ENCODE measurements at regions of chrX and their contacts with region 1.

Region 1: GRCh38 chrX:71181910-71182799 is 37.5 kb downstream of the NLGN3 start:
- DNase-seq: peak; percentile 95
- H3K4me3 ChIP-seq: peak overlapping the region in 2 of 3 experiments; percentile 33 to 55
- H3K27ac ChIP-seq: peak overlapping the region; percentile 63
- H3K4me1 ChIP-seq: peaks cover 7% of the 10 kb centered on the region
- H3K27me3 ChIP-seq: no peaks in the 10 kb centered on the region
- CTCF ChIP-seq: no peak
- POLR2A ChIP-seq: peak; percentile 68

Region 2: DNA sequence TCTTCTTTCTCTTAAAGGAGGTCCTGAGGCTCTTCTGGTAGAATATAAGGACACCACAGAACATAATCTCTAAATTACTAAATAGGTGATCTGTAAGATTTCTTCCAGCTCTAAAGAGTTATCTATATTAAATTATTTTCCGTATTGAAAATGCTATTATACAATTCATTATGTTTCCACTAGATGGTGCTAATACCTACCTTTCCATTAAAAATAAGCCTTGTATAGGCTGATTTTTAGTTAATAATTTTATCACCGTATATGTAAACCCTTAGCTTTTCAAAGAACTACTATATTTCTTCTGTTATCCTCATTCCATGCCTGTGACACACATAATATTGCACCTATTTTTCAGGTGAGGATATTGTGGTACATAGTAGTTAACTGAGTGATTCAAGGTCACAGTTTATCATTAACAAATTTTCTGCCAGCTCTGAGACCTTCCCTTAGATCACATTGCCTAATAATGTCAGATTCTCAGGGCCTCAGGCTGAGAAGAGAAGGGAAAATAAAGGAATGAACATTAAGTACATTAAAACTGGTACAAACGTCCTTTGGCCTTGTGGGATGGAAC is 412.4 kb before region 1 on chrX:
- CTCF ChIA-PET with region 1: interaction called, 7 read pairs
- POLR2A ChIA-PET with region 1: no interaction called
- dilution Hi-C with region 1: no loop called
- intact Hi-C with region 1: loop called (anchors 1 kb)
- DNase-seq: peak; percentile 3
- H3K4me3 ChIP-seq: no peak overlapping the region
- H3K27ac ChIP-seq: no peak overlapping the region
- H3K4me1 ChIP-seq: no peaks in the 10 kb centered on the region
- H3K27me3 ChIP-seq: no peaks in the 10 kb centered on the region
- CTCF ChIP-seq: no peak
- POLR2A ChIP-seq: no peak

Region 3: GRCh38 chrX:70998411-70999027 is 183.6 kb before region 1 on chrX:
- CTCF ChIA-PET with region 1: interaction called, 3 read pairs
- POLR2A ChIA-PET with region 1: no interaction called
- dilution Hi-C with region 1: no loop called
- intact Hi-C with region 1: loop called (anchors 1 kb)
- DNase-seq: peak; percentile 9
- H3K4me3 ChIP-seq: no peak overlapping the region
- H3K27ac ChIP-seq: no peak overlapping the region
- H3K4me1 ChIP-seq: no peaks in the 10 kb centered on the region
- H3K27me3 ChIP-seq: peaks cover 0 to 2% of the 10 kb centered on the region in 2 experiments
- CTCF ChIP-seq: peak in 1 of 2 donors; percentile 8
- POLR2A ChIP-seq: no peak

Region 4: DNA sequence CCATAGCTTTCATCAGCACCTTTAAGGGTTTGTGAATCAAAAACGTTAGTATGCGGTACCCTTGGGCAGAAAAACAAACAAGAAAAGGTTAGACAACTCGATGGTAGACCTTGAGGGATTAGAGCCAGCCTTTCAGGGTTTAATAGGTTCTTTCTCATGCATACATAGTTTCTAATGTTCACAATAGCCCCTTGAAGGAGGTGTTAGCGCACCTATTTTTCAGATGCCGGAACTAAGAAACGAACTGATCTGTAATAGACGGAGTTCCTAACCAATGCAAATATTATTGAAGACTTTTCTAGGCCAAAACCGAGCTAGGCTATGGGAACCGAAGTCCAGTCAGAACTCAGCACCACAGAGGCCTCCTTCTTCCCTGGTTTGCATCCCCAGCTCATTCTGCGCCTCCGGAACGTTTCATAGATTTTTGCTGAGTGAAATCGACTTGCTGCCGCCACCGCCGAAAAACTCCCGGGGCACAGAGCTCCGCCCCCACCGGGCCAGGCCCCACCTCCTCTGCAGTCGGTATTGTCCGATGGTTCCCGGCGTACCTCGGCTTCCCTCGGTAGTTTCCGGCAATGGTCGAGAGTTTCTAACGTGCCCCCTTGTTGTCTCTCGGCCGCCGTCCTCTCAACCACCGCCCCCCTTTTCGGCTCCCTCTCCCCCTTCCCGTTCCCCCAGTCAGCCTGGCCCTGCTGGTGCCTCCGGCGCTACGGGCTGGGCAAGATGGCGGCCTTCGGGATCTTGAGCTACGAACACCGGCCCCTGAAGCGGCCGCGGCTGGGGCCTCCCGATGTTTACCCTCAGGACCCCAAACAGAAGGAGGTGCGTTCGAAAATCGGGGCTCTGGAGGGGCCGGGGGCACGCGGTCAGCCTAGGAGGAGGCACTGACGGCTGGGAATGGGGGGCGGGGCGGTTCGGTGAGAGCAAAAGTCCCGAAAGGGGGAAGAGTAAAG is 63.8 kb before region 1 on chrX and contains the start of gene MED12:
- CTCF ChIA-PET with region 1: no interaction called
- POLR2A ChIA-PET with region 1: no interaction called
- dilution Hi-C with region 1: no loop called
- intact Hi-C with region 1: loop called (anchors 1 kb)
- DNase-seq: peak; percentile 76
- H3K4me3 ChIP-seq: peak within 1 kb of the TSS; percentile 53 to 79 (median 78)
- H3K27ac ChIP-seq: peak within 1 kb of the TSS; percentile 59
- H3K4me1 ChIP-seq: peaks cover 5% of the 10 kb centered on the region
- H3K27me3 ChIP-seq: peaks cover 0 to 3% of the 10 kb centered on the region in 2 experiments
- CTCF ChIP-seq: no peak
- POLR2A ChIP-seq: peak; percentile 66
- total RNA-seq, gene MED12: 61.4 and 65.3 TPM in 2 replicates

Region 5: DNA sequence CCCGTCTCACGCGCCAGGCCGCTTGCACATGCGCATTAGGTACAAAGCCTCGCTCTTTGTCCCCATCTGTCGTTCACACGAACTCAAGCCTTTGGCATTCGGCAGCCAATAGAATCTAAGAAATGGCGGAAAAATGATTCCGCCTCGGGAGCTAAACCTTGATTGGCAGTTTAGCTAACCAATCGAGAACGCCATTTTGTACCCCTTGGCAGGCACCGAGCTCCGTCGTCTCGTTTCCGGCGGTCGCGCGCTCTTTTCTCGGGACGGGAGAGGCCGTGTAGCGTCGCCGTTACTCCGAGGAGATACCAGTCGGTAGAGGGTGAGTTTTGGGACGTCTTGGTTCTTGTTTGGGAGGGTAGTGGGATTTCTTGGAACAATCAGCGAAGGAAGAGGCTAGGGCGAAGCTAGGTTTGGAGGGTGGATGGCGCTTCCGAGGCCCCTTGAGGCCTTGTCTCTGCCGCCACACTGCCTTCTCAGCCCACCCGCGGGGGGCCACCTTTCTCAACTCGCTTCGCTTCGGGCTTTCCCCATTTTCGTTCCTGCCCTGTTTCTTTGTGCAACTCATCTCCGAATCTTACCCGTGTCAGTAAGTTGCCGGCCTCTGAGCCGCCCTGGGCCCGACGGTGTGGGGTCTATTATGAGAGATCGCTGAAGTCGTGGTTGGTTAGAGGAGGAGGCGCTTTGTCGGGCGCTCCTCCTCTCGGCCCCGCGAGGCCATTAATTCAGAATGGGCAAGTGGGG is 101.4 kb after region 1 on chrX and contains the start of gene NONO:
- CTCF ChIA-PET with region 1: no interaction called
- POLR2A ChIA-PET with region 1: interaction called, 7 read pairs
- dilution Hi-C with region 1: no loop called
- intact Hi-C with region 1: loop called (anchors 1 kb)
- DNase-seq: peak; percentile 96
- H3K4me3 ChIP-seq: peak within 1 kb of the TSS; percentile 62 to 96 (median 92)
- H3K27ac ChIP-seq: peak within 1 kb of the TSS; percentile 97
- H3K4me1 ChIP-seq: peaks cover 13% of the 10 kb centered on the region
- H3K27me3 ChIP-seq: no peaks in the 10 kb centered on the region
- CTCF ChIP-seq: peak; percentile 2 to 13
- POLR2A ChIP-seq: peak; percentile 71
- total RNA-seq, gene NONO: 465 and 466 TPM in 2 replicates